Panc1 (cell line): ENCODE measurements at regions of chr22 and their contacts with region 1.

Region 1: GRCh38 chr22:46967445-46968358 is 205.3 kb downstream of the TBC1D22A start:
- DNase-seq: no peak
- ATAC-seq: no peak
- H3K4me3 ChIP-seq: no peak overlapping the region
- H3K27ac ChIP-seq: no peak overlapping the region
- H3K4me1 ChIP-seq: no peaks in the 10 kb centered on the region
- H3K27me3 ChIP-seq: no peaks in the 10 kb centered on the region
- CTCF ChIP-seq: no peak

Region 2: DNA sequence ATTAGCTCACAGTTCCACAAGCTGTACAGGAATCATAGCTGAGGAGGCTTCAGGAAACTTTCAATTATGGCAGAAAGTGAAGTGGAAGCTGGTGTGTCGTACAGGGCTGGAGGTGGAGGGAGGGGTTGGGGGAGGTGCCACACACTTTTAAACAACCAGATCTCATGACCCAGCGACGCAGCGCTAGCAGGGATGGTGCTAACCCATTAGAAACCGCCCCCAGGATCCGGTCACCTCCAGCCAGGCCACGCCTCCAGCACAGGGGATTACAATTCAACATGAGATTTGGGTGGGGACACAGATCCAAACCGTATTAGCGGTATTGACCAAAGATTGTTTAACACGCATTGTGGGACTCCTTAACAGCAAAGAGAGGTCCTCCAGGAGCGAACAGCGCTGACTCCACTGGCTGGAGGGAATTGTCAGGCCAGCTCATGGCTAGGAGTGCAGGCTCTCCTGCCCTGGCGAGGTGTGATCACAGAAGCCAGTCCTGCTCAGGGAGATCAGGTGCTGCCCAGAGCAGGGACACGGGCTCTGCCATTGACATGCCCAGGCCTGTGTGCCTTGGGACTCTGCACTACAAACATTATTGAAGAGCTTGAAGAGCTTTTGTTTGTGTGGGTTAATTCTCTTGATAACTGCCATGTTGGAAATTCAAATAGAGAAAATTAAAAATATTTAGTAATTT is 10.1 kb after region 1 on chr22:
- CTCF ChIA-PET with region 1: interaction called, 11 read pairs
- POLR2A ChIA-PET with region 1: no interaction called
- in situ Hi-C with region 1: no loop called
- intact Hi-C with region 1: no loop called
- DNase-seq: no peak
- ATAC-seq: no peak
- H3K4me3 ChIP-seq: no peak overlapping the region
- H3K27ac ChIP-seq: no peak overlapping the region
- H3K4me1 ChIP-seq: no peaks in the 10 kb centered on the region
- H3K27me3 ChIP-seq: no peaks in the 10 kb centered on the region
- CTCF ChIP-seq: no peak